ENCODE measurements at regions of chr5 and their contacts with region 1.

Region 1: DNA sequence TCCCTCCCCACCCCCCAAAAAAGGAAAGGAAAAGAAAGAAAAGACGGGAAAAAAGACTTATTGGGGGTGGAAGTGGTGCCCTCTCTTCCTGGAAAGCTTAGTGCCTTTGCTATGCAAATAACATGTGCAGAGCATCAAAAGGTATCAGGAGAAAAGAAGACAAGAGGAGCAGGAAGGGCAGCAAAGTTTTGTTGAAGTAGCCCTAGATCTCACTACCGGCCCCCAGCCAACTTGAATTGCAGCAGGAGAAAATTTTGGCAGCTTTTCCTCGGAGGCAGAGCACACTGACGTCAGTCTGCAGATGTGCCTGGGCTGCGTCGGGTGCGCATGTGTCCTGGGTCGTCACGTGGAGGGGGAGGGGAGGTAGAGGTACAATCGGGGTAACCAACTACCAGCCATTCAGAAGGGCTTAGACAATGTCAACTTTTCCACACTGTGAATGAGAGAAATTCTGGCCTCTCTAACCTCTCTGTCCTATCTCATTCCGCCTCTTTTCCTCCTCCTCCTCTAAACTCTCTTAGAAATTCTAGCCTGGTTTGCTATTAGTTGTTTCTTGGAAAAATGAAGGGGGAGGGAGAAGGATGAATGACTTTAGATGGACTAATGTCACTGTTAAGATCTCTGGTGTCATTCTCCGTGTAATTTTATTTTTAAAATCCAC is at the start of gene ADAMTS6:
- DNase-seq: peak; percentile 86
- ATAC-seq: peak; percentile 92
- H3K4me3 Mint-ChIP-seq: no peak within 1 kb of the TSS
- H3K27ac Mint-ChIP-seq: peak within 1 kb of the TSS; percentile 85
- H3K4me1 Mint-ChIP-seq: peaks cover 22% of the 10 kb centered on the region
- H3K27me3 Mint-ChIP-seq: no peaks in the 10 kb centered on the region
- total RNA-seq, gene ADAMTS6: 1.8 to 3.4 TPM

Region 2: DNA sequence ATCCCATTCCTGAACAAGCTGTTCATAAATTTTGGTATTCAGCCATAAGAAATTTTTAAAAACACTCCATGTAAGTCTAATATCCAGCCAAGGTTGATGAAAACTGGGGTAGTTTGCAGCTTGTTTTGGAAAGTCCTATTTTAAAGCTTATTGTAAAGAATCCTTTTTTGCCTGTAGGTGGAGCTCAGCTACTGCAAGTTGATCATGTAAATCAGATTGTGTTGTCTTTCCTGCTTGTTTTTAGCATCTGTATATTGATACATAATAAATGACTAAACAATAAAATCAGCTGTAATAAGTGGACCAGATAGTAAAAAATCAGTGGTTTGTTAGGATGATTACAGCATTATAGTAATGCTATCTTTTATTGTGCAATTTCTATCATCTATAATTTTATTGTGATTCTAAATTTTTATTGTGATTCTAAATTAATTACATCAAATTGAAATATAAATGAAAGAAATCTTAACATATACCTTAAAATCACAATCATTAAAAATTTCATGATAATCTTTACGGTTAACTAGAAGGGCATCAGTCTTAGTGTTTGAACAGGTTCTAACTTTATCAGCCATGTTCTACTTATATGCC is 670.6 kb before region 1 on chr5:
- CTCF ChIA-PET with region 1: interaction called, 79 read pairs
- POLR2A ChIA-PET with region 1: no interaction called
- DNase-seq: peak; percentile 34
- ATAC-seq: peak; percentile 39
- H3K4me3 Mint-ChIP-seq: no peak overlapping the region
- H3K27ac Mint-ChIP-seq: no peak overlapping the region
- H3K4me1 Mint-ChIP-seq: no peaks in the 10 kb centered on the region
- H3K27me3 Mint-ChIP-seq: no peaks in the 10 kb centered on the region

Region 3: GRCh38 chr5:64958757-64959391 is 522.9 kb before region 1 on chr5:
- CTCF ChIA-PET with region 1: interaction called, 24 read pairs
- POLR2A ChIA-PET with region 1: no interaction called
- DNase-seq: no peak
- ATAC-seq: no peak
- H3K4me3 Mint-ChIP-seq: no peak overlapping the region
- H3K27ac Mint-ChIP-seq: no peak overlapping the region
- H3K4me1 Mint-ChIP-seq: no peaks in the 10 kb centered on the region
- H3K27me3 Mint-ChIP-seq: no peaks in the 10 kb centered on the region

Region 4: DNA sequence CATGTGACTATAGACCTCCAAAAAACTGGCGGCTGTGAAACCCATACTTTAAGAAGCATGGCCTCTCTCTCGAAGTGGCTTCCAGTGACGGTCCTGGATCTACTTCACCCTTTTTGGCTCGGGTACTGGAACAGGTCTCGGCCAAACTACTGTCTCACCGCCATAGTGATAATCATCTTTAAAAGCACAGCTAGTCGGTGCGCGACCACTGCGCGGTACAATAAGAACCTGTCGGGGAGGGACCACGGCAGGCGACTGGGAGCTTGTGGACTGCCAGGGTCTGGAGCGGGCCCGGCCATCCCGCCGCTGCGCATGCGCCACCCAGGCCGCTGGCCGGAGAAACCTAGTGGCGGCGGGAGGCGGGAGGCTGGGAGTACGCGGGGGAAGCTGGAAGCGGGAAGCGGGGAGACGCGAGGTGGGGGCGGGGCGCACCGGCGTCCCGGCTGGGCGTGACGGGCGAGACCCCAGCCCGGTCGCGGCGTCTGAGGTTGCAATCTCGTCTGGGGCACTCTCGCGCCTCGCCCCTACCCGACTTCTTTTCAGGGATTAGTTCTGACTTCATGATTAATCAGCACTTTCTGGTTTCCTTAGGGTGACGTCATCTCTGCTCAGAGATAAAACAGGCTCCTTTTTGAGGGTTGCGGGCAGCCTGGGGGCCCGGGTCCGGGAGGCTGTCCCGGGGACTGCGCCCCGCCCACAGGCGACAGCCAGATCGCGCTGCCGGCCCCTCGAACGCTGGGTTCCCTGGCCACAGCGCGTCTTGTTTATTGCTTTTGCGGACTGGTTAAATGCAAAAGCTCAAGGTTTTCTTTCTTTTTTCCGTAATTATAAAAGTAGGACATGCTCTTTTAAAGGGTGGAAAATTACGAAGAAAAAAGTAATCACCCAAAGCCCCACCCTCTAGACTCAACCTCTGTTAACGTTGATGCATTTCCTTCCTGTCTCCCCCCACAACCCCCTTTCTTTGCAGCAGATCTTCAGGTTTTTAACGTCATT is 446.3 kb before region 1 on chr5:
- CTCF ChIA-PET with region 1: interaction called, 12 read pairs
- POLR2A ChIA-PET with region 1: interaction called, 5 read pairs
- DNase-seq: peak; percentile 89
- ATAC-seq: peak; percentile 90
- H3K4me3 Mint-ChIP-seq: peak overlapping the region; percentile 71
- H3K27ac Mint-ChIP-seq: peak overlapping the region; percentile 92
- H3K4me1 Mint-ChIP-seq: peaks cover 42% of the 10 kb centered on the region
- H3K27me3 Mint-ChIP-seq: no peaks in the 10 kb centered on the region

Region 5: GRCh38 chr5:65076251-65076869 is 405.4 kb before region 1 on chr5:
- CTCF ChIA-PET with region 1: interaction called, 10 read pairs
- POLR2A ChIA-PET with region 1: no interaction called
- DNase-seq: peak; percentile 84
- ATAC-seq: peak; percentile 98
- H3K4me3 Mint-ChIP-seq: no peak overlapping the region
- H3K27ac Mint-ChIP-seq: no peak overlapping the region
- H3K4me1 Mint-ChIP-seq: peaks cover 19% of the 10 kb centered on the region
- H3K27me3 Mint-ChIP-seq: peaks cover 16% of the 10 kb centered on the region

Region 6: GRCh38 chr5:65102828-65103711 is 378.7 kb before region 1 on chr5:
- CTCF ChIA-PET with region 1: interaction called, 19 read pairs
- POLR2A ChIA-PET with region 1: interaction called, 5 read pairs
- DNase-seq: peak; percentile 53
- ATAC-seq: peak; percentile 83
- H3K4me3 Mint-ChIP-seq: peak overlapping the region; percentile 73
- H3K27ac Mint-ChIP-seq: peak overlapping the region; percentile 80
- H3K4me1 Mint-ChIP-seq: peaks cover 55% of the 10 kb centered on the region
- H3K27me3 Mint-ChIP-seq: peaks cover 11% of the 10 kb centered on the region

Measured in activated CD8-positive, alpha-beta T cell treated with anti-CD3 and anti-CD28 coated beads, Interleukin-2, amount 10 ng/mL, durations not matched to agents 7 days and 5 days (primary cell).